Activated B cell treated with CpG ODN at 0.5 μM for 24 hours (primary cell): ENCODE measurements at regions of chr19 and their contacts with region 1.

Region 1: DNA sequence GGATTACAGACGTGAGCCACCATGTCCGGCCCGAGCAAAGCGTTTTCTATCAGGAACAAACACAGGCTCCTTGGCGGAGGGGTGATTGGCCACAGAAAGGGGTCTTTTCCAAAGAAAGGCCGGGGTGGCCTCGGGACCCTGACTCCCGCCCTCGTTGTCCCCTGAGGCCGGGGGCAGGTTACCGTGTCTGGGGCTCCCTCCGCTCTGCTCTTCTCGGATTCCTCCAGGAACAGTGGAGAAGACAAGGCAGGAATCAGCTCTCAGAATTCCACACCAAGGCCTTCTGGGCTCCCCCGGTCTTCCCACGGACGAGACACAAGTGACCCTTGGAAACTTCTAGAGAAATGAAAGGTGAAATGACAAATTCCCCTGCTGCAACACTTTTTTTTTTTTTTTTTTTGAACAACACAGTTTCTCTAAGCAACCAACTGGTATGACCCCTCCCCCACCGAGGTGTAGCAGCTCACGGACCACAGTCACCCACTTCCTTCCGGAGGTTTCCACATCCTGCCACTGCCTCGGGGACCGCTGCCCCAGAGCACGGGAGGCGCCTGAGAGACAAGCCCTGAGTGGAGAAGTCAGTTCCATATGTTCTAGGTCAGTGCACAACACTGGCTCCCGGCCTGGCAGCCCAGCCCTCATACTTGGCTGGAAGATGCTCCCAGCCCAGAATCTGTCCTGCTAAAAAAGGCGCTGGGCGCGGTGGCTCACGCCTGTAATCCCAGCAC is 11.0 kb downstream of the MOB3A start:
- DNase-seq: peak; percentile 80
- ATAC-seq: peak; percentile 23
- H3K4me3 Mint-ChIP-seq: peak overlapping the region; percentile 97
- H3K27ac Mint-ChIP-seq: peak overlapping the region; percentile 99
- H3K4me1 Mint-ChIP-seq: peaks cover 88% of the 10 kb centered on the region
- H3K27me3 Mint-ChIP-seq: no peaks in the 10 kb centered on the region
- CTCF ChIP-seq: no peak

Region 2: GRCh38 chr19:1754616-1755466 is 330.3 kb before region 1 on chr19:
- CTCF ChIA-PET with region 1: no interaction called
- POLR2A ChIA-PET with region 1: no interaction called
- intact Hi-C with region 1: no loop called
- DNase-seq: no peak
- ATAC-seq: no peak
- H3K4me3 Mint-ChIP-seq: no peak overlapping the region
- H3K27ac Mint-ChIP-seq: no peak overlapping the region
- H3K4me1 Mint-ChIP-seq: peaks cover 33% of the 10 kb centered on the region
- H3K27me3 Mint-ChIP-seq: peaks cover 38% of the 10 kb centered on the region
- CTCF ChIP-seq: no peak

Region 3: DNA sequence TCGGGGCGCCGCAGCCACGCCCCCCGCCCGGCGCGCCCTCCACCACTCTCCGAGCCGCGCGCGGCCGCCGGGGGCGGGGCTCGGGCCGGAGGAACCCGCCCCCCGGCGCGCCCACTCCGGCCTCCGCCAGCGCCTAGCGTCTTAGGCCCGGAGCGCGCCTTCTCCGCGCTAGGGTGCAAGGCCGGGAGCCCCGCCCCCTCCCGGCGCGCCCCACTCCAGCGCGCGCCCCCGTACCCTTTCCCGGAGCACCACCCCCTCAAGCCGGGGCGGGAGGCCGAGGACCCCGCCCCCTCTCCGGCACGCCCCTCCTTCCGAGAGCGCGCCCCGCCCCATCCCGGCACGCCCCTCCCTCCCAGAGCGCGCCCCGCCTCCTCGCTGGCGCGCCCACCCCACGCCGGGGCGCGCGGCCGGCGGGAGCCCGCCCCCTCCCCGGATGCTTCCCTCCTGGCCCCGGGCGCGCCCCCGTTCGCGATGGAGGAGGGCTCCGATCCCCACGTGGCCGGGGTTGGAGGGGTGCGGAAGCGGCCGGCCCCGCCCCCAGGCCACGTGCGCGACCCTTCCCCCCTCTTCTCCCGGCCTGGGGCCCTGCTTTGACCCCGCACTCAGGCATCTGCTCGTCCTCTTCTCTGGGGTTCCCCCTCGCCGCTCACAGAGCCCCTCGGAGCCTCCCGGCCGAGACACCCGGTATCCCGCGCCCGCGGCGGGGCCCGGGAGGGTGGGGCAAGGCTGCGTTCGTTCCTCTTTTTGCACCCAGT is 221.3 kb before region 1 on chr19:
- CTCF ChIA-PET with region 1: interaction called, 3 read pairs
- POLR2A ChIA-PET with region 1: interaction called, 7 read pairs
- intact Hi-C with region 1: loop called (anchors 5 kb)
- DNase-seq: peak; percentile 92
- ATAC-seq: peak; percentile 68
- H3K4me3 Mint-ChIP-seq: peak overlapping the region; percentile 87
- H3K27ac Mint-ChIP-seq: peak overlapping the region; percentile 92
- H3K4me1 Mint-ChIP-seq: peaks cover 36% of the 10 kb centered on the region
- H3K27me3 Mint-ChIP-seq: no peaks in the 10 kb centered on the region
- CTCF ChIP-seq: no peak

Region 4: GRCh38 chr19:2041683-2042484 is 43.3 kb before region 1 on chr19:
- CTCF ChIA-PET with region 1: interaction called, 9 read pairs
- POLR2A ChIA-PET with region 1: interaction called, 2,723 read pairs
- intact Hi-C with region 1: loop called (anchors 1 kb)
- DNase-seq: peak; percentile 96
- ATAC-seq: peak; percentile 69
- H3K4me3 Mint-ChIP-seq: peak overlapping the region; percentile 61
- H3K27ac Mint-ChIP-seq: peak overlapping the region; percentile 81
- H3K4me1 Mint-ChIP-seq: peaks cover 70% of the 10 kb centered on the region
- H3K27me3 Mint-ChIP-seq: no peaks in the 10 kb centered on the region
- CTCF ChIP-seq: no peak

Region 5: DNA sequence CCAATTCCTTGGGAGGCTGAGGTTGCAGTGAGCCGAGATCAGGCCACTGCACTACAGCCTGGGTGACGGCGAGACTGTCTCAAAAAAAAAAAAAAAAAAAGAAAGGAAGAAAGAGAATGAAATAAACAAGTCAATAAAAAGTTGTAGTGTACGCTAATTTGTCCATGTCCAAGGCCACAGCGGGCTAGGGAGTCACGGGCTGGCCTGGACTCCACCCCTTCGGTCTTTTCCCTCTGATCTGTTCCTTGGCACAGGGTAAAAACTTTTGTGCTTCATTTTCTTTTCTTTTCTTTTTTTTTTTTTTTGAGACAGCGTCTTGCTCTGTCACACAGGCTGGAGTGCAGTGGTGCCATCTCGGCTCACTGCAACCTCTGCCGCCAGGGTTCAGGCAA is 14.7 kb before region 1 on chr19:
- CTCF ChIA-PET with region 1: interaction called, 14 read pairs
- POLR2A ChIA-PET with region 1: interaction called, 2,723 read pairs
- intact Hi-C with region 1: loop called (anchors 1 kb)
- DNase-seq: no peak
- ATAC-seq: no peak
- H3K4me3 Mint-ChIP-seq: no peak overlapping the region
- H3K27ac Mint-ChIP-seq: no peak overlapping the region
- H3K4me1 Mint-ChIP-seq: peaks cover 57% of the 10 kb centered on the region
- H3K27me3 Mint-ChIP-seq: no peaks in the 10 kb centered on the region
- CTCF ChIP-seq: no peak

Region 6: DNA sequence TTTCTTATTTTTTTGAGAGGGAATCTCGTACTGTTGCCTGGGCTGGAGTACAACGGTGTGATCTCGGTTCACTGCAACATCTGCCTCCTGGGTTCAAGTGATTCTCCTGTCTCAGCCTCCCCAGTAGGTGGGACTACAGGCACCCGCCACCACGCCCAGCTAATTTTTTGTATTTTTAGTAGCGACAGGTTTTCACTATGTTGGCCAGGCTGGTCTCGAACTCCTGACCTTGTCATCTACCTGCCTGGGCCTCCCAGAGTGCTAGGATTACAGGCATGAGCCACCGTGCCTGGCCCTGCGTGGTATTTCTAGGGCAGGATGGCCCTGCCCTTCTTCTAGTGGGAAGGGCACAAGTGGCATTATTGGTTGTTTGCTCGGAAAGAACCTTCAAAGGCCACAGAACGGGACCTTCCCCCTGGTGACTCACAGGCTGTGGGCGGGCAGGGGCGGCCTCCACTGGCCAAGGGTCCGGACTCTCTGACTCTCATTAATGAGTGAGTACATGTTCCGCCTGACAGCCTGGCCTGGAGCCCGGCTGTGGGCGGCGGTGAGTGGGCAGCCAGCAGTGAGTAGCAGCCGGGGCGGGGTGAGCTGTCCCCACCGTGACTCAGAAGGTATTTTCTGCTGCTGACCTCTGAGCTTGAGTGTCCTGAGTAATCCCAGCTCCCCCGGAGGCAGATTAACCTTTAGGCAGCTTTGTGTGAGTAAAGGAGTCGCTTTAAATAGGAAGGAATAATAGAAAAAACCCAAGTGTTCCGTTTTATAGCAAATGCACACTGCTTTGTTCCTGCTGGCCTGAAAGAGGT is 83.7 kb after region 1 on chr19:
- CTCF ChIA-PET with region 1: no interaction called
- POLR2A ChIA-PET with region 1: interaction called, 4 read pairs
- intact Hi-C with region 1: loop called (anchors 5 kb)
- DNase-seq: peak; percentile 74
- ATAC-seq: peak; percentile 49
- H3K4me3 Mint-ChIP-seq: peak overlapping the region; percentile 84
- H3K27ac Mint-ChIP-seq: peak overlapping the region; percentile 92
- H3K4me1 Mint-ChIP-seq: peaks cover 84% of the 10 kb centered on the region
- H3K27me3 Mint-ChIP-seq: no peaks in the 10 kb centered on the region
- CTCF ChIP-seq: no peak

Region 7: GRCh38 chr19:3185482-3186376 is 1100.6 kb after region 1 on chr19 and contains the start of gene NCLN:
- CTCF ChIA-PET with region 1: no interaction called
- POLR2A ChIA-PET with region 1: no interaction called
- intact Hi-C with region 1: loop called (anchors 10 kb)
- DNase-seq: peak; percentile 98
- ATAC-seq: peak; percentile 86
- H3K4me3 Mint-ChIP-seq: peak within 1 kb of the TSS; percentile 93
- H3K27ac Mint-ChIP-seq: peak within 1 kb of the TSS; percentile 95
- H3K4me1 Mint-ChIP-seq: peaks cover 74% of the 10 kb centered on the region
- H3K27me3 Mint-ChIP-seq: no peaks in the 10 kb centered on the region
- CTCF ChIP-seq: no peak
- total RNA-seq, gene NCLN: 61.1 and 64.8 TPM in 2 replicates